Activated CD4-positive, alpha-beta T cell treated with anti-CD3 and anti-CD28 coated beads, Interleukin-2, amount 10 ng/mL, durations not matched to agents 24 days and 14 days (primary cell): ENCODE measurements at regions of chr20 and their contacts with region 1.

Region 1: DNA sequence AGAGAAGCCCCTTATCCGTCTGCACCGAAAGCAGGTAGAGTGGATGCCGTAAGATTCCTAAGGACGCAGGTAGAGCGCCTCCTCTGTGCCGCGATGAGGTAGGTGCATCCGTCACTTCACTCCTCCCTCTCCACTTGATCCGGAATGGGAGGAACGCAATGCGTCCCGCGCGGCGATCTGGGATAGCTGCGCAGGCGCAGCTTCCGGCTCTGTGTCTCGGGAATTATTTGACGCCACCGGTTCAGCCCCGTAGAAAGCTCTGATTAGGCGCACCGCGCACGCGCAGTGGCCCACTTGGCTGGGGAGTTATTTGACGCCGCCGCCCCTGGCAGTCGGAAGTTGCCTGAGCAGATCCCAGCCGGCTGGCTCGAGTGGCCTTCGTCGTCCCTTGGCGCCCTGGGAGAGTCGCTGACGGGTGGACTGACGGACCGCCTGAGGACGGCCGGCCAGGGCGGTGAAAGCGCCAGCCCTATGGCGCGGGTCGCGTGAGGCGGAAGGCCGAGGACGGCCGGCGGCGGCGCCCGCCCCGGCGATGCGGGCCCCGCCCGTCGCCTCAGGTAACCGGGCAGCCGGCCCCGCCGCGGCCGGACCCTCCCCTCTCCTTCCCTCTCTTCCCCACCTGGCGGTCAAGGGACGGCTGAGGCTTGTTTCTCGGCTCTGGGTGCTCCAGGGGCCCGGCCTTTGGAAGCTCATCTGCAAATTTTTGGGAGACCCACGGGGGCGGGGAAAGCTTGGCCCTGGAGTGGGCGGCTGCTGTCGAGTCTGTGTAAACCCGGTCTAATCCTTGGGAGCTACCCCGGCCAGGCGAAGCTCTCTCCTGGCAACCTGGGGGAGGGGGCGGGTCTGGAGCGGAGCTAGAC is at the start of gene RALGAPB:
- DNase-seq: peak; percentile 99
- H3K4me3 Mint-ChIP-seq: peak within 1 kb of the TSS; percentile 90
- H3K27ac Mint-ChIP-seq: peak within 1 kb of the TSS; percentile 91
- H3K4me1 Mint-ChIP-seq: peaks cover 30% of the 10 kb centered on the region
- H3K27me3 Mint-ChIP-seq: peaks cover 13% of the 10 kb centered on the region
- total RNA-seq, gene RALGAPB: 28.3 and 29.8 TPM in 2 replicates

Region 2: DNA sequence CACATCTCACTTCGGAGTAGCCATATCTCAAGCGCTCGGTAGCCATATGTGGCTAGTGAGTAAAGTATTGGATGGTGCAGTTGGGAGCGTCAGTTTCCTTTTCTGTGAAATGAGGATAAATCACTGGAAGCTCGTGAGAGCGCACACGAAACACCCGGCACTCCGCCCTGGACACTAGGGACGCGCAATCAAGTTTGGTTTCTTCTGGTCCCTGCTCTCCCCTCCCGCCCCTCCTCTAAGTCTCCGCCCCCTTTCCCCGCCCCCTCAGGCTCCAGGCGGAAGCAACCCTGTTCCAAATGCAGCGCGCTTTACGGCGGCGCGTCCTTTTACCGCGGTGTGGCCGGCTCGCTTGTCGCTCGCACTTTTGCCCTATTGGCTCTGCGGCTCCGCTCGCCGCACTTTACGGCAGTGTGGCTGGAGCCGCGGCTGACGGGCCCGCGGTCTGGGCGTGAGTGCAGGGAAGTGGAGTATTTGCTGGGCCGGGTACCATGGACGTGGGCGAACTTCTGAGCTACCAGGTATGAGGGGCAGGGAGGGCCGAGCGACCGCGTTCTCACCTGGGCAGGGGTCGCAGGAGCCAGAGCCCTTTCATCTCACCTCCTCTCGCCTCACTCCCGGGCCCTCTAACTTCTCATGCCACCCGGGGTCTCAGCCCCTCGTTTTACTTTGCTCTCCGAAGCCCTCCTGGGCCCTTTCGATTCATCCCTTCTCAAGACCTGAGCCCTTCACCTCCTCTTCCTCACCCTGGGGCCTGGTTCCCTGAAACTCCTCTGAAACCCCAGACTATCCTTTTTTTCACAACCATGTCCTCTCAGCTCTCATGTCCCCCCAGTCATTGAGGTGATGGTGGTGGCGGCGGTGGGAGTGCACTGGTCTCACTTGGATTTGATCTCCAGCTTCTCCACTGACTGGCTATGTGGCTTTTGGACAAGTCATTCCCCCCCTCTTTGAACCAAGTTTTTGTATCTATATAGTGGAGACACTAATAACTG is 778.8 kb before region 1 on chr20 and contains the start of gene CTNNBL1:
- intact Hi-C with region 1: loop called (anchors 10 kb)
- DNase-seq: peak; percentile 98
- H3K4me3 Mint-ChIP-seq: peak within 1 kb of the TSS; percentile 96
- H3K27ac Mint-ChIP-seq: peak within 1 kb of the TSS; percentile 91
- H3K4me1 Mint-ChIP-seq: peaks cover 21% of the 10 kb centered on the region
- H3K27me3 Mint-ChIP-seq: peaks cover 12% of the 10 kb centered on the region
- total RNA-seq, gene CTNNBL1: 97.9 and 105 TPM in 2 replicates

Region 3: GRCh38 chr20:38033310-38034107 is 439.2 kb before region 1 on chr20 and contains the starts of genes RPRD1B and TTI1:
- intact Hi-C with region 1: loop called (anchors 1 kb)
- DNase-seq: peak; percentile 98
- H3K4me3 Mint-ChIP-seq: peak within 1 kb of the TSS; percentile 98
- H3K27ac Mint-ChIP-seq: peak within 1 kb of the TSS; percentile 99
- H3K4me1 Mint-ChIP-seq: peaks cover 54% of the 10 kb centered on the region
- H3K27me3 Mint-ChIP-seq: no peaks in the 10 kb centered on the region
- total RNA-seq, gene RPRD1B: 49.8 and 51.2 TPM in 2 replicates
- total RNA-seq, gene TTI1: 43.3 and 48.8 TPM in 2 replicates

Region 4: GRCh38 chr20:38369389-38369788 is 103.4 kb before region 1 on chr20:
- intact Hi-C with region 1: no loop called
- DNase-seq: no peak
- H3K4me3 Mint-ChIP-seq: no peak overlapping the region
- H3K27ac Mint-ChIP-seq: no peak overlapping the region
- H3K4me1 Mint-ChIP-seq: no peaks in the 10 kb centered on the region
- H3K27me3 Mint-ChIP-seq: peaks cover 10% of the 10 kb centered on the region

Region 5: GRCh38 chr20:38434743-38435554 is 37.8 kb before region 1 on chr20 and contains the start of gene SNHG17:
- intact Hi-C with region 1: loop called (anchors 1 kb)
- DNase-seq: peak; percentile 97
- H3K4me3 Mint-ChIP-seq: peak within 1 kb of the TSS; percentile 96
- H3K27ac Mint-ChIP-seq: peak within 1 kb of the TSS; percentile 96
- H3K4me1 Mint-ChIP-seq: peaks cover 32% of the 10 kb centered on the region
- H3K27me3 Mint-ChIP-seq: peaks cover 2% of the 10 kb centered on the region
- total RNA-seq, gene SNHG17: 99.8 and 111 TPM in 2 replicates

Region 6: GRCh38 chr20:38446441-38447209 is 26.1 kb before region 1 on chr20:
- intact Hi-C with region 1: loop called (anchors 1 kb)
- DNase-seq: peak; percentile 98
- H3K4me3 Mint-ChIP-seq: peak overlapping the region; percentile 85
- H3K27ac Mint-ChIP-seq: peak overlapping the region; percentile 93
- H3K4me1 Mint-ChIP-seq: peaks cover 30% of the 10 kb centered on the region
- H3K27me3 Mint-ChIP-seq: peaks cover 7% of the 10 kb centered on the region

Region 7: GRCh38 chr20:38610521-38610920 is 137.8 kb after region 1 on chr20:
- intact Hi-C with region 1: no loop called
- DNase-seq: no peak
- H3K4me3 Mint-ChIP-seq: no peak overlapping the region
- H3K27ac Mint-ChIP-seq: no peak overlapping the region
- H3K4me1 Mint-ChIP-seq: no peaks in the 10 kb centered on the region
- H3K27me3 Mint-ChIP-seq: peaks cover 25% of the 10 kb centered on the region